ENCODE measurements at regions of chr11 and their contacts with region 1.

Region 1: GRCh38 chr11:17063171-17064002 is 14.1 kb downstream of the RPS13 start:
- DNase-seq: peak; percentile 62
- ATAC-seq: peak; percentile 94 to 95

Region 2: DNA sequence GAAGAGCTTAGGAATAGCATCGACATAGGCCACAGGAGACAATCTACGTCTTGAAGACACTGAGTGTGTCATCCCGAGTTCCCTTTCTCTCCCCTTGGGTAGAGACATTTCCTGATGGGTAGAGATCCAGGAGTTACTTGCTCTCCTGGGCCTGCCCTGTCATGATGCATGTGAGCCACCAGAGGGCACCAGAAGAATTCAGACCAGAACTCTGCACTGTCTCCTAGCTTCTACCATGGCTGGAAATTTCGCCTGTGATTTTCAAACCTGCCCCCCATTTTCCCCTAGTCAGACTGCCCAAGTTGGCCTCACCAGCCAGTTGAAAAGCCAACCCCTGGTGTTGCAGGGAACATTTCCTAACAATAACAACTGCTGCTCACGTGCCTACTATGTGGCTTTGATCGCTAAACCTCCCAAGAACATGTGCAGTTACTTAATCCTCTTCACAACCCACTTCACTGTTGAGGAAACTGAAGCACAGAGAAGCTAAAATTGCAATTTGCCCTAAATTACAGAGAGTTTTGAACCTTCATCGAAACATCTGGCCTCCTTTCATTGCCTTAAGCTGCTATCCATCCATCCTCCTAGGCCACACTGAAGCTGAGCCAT is 277.8 kb before region 1 on chr11:
- intact Hi-C with region 1: loop called (anchors 2 to 5 kb)
- DNase-seq: peak; percentile 66
- ATAC-seq: peak; percentile 62 to 76

Region 3: GRCh38 chr11:16820324-16821092 is 242.9 kb before region 1 on chr11:
- intact Hi-C with region 1: loop called in 1 of 2 experiments (anchors 10 kb)
- DNase-seq: peak; percentile 84
- ATAC-seq: peak; percentile 69 to 77

Region 4: DNA sequence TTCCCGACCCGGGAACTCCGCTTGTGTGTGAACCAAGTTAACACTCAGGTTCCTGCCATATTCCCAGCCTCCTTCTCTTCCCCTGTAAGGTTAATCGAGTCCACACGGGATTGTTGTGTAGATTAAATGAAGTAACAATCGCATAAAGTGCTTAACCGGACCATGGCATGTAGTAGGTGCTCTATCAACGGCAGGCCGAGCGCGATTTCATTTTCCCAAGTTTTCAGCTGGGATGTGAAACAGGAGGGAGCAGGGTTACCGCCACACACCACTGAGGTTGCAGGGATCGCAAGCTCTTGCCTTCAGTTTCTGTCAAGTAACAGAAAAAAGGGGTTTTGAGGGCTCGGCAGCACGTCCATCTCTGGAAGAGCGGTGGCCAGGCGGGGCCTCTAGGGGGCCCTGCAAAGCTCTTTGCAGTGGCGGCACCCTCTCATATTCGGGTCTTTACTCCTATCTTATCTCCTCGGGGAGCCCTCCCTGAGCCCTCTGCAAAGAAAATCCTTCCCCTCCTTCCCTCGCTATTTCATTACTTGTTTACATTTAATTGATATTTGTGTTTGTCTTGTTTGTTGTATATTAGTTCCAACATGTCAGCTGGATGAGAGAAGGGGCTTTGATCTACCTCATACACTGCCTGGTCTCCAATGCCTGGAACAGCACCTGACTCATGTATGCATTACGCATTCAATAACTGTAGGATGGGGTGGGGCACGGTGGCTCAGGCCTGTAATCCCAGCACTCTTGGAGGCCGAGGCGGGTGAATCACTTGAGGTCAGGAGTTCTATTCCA is 48.4 kb before region 1 on chr11:
- intact Hi-C with region 1: loop called in 1 of 2 experiments (anchors 10 kb)
- DNase-seq: peak; percentile 23
- ATAC-seq: peak in 1 of 2 donors; percentile 5

Measured in left cardiac atrium (tissue), 4 donors.